Mammary epithelial cell (primary cell): ENCODE measurements at regions of chr9 and their contacts with region 1.

Region 1: DNA sequence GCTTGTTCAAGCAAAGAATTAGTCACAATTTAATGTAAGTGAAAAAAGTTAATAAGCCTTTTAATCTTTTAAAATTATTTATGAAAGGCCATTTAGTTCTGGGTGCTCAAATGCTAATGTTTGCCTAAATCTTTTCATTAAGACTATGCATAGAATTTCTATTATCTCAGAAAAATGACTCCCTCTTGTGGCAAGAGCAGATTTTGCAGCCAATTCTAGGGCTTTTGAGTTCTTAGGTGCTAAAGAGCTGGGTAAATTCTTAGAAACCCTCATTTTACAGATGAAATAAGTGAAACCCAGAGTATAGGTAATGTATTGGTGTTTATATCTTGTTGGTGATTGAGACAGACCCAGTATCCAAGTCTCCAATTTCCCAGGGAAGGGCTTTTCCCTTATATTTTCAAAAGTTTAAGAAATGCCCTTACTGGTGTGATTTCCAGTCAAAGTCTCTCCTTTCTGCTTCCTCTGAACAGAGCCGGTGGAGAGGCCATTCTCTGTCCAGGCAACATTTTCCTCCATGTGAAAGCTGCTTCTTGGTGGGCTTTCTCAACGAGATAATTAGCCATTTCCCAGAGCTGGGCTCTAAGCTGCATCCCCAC is 24.1 kb upstream of the PCSK5 start:
- DNase-seq: peak; percentile 27
- H3K4me3 ChIP-seq: no peak overlapping the region
- H3K27ac ChIP-seq: no peak overlapping the region
- H3K4me1 ChIP-seq: no peaks in the 10 kb centered on the region
- H3K27me3 ChIP-seq: no peaks in the 10 kb centered on the region
- CTCF ChIP-seq: peak; percentile 66 to 69

Region 2: GRCh38 chr9:74609671-74610405 is 1256.5 kb before region 1 on chr9:
- CTCF ChIA-PET with region 1: interaction called, 15 read pairs
- dilution Hi-C with region 1: no loop called
- in situ Hi-C with region 1: no loop called
- intact Hi-C with region 1: no loop called
- DNase-seq: peak; percentile 4
- H3K4me3 ChIP-seq: no peak overlapping the region
- H3K27ac ChIP-seq: no peak overlapping the region
- H3K4me1 ChIP-seq: no peaks in the 10 kb centered on the region
- H3K27me3 ChIP-seq: peaks cover 3% of the 10 kb centered on the region
- CTCF ChIP-seq: no peak

Region 3: DNA sequence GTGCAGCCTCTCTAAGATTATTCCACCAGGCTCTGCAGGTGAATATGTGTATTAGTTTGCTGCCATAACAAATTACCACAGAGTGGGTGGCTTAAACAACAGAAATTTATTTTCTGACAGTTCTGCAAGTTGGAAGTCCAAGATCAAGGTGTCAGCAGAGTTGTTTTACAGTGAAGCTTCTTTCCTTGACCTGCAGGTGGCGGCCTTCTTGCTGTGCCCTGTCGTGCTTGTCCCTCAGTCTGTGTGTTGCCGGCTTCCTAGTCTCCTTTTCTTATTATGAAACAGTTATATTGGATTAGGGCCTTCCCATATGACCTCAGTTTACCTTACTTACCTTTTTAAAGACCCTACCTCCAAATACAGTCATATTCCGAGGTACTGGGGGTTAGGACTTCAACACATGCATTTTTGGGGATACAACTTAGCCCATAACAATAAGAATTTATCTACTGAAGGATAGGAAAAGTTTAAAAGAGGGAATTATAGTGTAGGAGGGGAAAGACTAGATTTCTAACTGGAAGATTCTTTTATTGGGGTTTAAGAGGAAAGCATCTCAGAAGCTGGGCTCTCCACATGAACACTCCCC is 680.7 kb before region 1 on chr9:
- CTCF ChIA-PET with region 1: no interaction called
- dilution Hi-C with region 1: no loop called
- in situ Hi-C with region 1: loop called in 1 of 2 experiments (anchors 25 kb)
- intact Hi-C with region 1: no loop called
- DNase-seq: no peak
- H3K4me3 ChIP-seq: no peak overlapping the region
- H3K27ac ChIP-seq: no peak overlapping the region
- H3K4me1 ChIP-seq: peaks cover 3% of the 10 kb centered on the region
- H3K27me3 ChIP-seq: no peaks in the 10 kb centered on the region
- CTCF ChIP-seq: peak; percentile 60 to 71

Region 4: GRCh38 chr9:75200892-75201470 is 665.4 kb before region 1 on chr9:
- CTCF ChIA-PET with region 1: no interaction called
- dilution Hi-C with region 1: no loop called
- in situ Hi-C with region 1: loop called in 1 of 2 experiments (anchors 25 kb)
- intact Hi-C with region 1: loop called (anchors 2 kb)
- DNase-seq: peak; percentile 12
- H3K4me3 ChIP-seq: no peak overlapping the region
- H3K27ac ChIP-seq: no peak overlapping the region
- H3K4me1 ChIP-seq: no peaks in the 10 kb centered on the region
- H3K27me3 ChIP-seq: no peaks in the 10 kb centered on the region
- CTCF ChIP-seq: peak; percentile 29 to 60

Region 5: DNA sequence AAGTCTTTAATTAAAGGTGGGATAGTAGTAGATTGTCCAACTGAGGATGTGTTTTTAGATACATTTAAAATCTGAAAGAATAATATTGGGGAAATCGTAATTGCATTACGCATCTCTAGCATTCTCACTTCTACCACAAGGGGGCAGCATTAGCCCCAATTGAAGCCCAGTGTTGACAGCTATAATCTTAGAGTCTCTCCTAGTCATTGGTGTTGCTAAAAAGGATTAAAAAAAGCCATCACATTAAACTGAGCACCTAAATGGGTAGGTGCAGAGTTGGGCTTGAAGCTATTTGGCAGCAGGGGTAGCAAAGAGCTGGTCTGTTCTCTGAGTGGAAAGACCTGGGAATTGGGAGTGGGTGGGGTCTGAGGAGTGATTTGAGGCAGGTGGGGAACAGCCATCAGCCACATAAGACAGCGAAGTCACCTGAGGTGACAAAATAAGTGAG is 600.8 kb before region 1 on chr9:
- CTCF ChIA-PET with region 1: no interaction called
- dilution Hi-C with region 1: no loop called
- in situ Hi-C with region 1: loop called in 1 of 2 experiments (anchors 25 kb)
- intact Hi-C with region 1: no loop called
- DNase-seq: peak; percentile 27
- H3K4me3 ChIP-seq: no peak overlapping the region
- H3K27ac ChIP-seq: no peak overlapping the region
- H3K4me1 ChIP-seq: no peaks in the 10 kb centered on the region
- H3K27me3 ChIP-seq: no peaks in the 10 kb centered on the region
- CTCF ChIP-seq: peak; percentile 87

Region 6: GRCh38 chr9:75918154-75918553 is 51.8 kb after region 1 on chr9:
- CTCF ChIA-PET with region 1: interaction called, 17 read pairs
- dilution Hi-C with region 1: no loop called
- in situ Hi-C with region 1: no loop called
- intact Hi-C with region 1: no loop called
- DNase-seq: peak; percentile 86
- H3K4me3 ChIP-seq: no peak overlapping the region
- H3K27ac ChIP-seq: peak overlapping the region; percentile 55
- H3K4me1 ChIP-seq: peaks cover 8% of the 10 kb centered on the region
- H3K27me3 ChIP-seq: no peaks in the 10 kb centered on the region
- CTCF ChIP-seq: no peak

Region 7: DNA sequence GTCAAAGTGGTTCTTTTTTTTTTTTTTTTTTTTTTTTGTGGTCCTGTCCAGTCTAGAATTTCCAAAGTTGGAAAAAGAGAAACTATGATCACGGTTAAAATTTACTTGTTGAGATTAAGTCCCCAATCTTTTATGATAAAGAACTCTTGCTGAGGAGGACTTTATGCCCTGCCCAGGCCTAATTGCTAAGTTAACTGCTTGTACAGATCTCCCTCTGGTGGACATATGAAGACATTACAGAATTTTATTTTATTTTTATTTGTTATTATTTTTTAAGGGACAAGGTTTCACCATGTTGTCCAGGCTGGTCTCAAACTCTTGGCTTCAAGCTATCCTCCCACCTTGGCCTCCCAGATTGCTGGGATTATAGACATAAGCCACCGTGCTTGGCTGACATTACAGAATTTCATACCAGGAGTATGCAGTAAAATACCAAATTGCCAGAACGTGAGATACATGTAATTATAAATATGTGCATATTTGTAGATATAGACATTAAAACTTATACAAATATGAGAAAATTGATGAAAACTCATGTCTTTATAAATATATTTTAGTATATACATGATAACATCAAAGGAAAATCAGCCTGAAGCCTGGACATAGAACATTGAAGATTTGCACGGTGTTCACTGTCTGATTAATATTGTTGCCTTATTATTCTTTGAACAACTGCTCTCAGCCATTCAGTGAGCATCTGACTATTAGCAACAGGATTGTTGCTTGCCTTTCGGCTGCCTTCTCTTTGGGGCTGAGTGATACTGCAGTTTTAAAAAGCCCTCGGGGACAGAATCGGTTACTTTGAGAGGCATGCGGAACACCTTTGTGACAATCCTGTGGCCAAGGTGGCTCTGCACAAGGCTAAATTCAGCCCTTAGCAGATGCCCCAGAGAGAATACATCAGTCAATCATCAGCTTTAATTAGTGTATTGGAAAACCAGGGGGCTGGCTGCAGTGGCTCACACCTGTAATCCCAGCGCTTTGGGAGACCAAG is 436.9 kb after region 1 on chr9:
- CTCF ChIA-PET with region 1: interaction called, 3 read pairs
- dilution Hi-C with region 1: no loop called
- in situ Hi-C with region 1: no loop called
- intact Hi-C with region 1: loop called (anchors 2 kb)
- DNase-seq: peak; percentile 26
- H3K4me3 ChIP-seq: no peak overlapping the region
- H3K27ac ChIP-seq: no peak overlapping the region
- H3K4me1 ChIP-seq: no peaks in the 10 kb centered on the region
- H3K27me3 ChIP-seq: no peaks in the 10 kb centered on the region
- CTCF ChIP-seq: peak; percentile 42 to 65